ENCODE measurements at regions of chr18 and their contacts with region 1.

Region 1: GRCh38 chr18:54127759-54128378 is 96.6 kb downstream of the MBD2 start:
- DNase-seq: peak; percentile 41
- ATAC-seq: peak; percentile 95
- H3K4me3 ChIP-seq: no peak overlapping the region
- H3K27ac ChIP-seq: no peak overlapping the region
- H3K4me1 ChIP-seq: no peaks in the 10 kb centered on the region
- H3K27me3 ChIP-seq: no peaks in the 10 kb centered on the region
- CTCF ChIP-seq: peak; percentile 65
- EP300 ChIP-seq: no peak
- POLR2A ChIP-seq: no peak
- RAD21 ChIP-seq: no peak

Region 2: DNA sequence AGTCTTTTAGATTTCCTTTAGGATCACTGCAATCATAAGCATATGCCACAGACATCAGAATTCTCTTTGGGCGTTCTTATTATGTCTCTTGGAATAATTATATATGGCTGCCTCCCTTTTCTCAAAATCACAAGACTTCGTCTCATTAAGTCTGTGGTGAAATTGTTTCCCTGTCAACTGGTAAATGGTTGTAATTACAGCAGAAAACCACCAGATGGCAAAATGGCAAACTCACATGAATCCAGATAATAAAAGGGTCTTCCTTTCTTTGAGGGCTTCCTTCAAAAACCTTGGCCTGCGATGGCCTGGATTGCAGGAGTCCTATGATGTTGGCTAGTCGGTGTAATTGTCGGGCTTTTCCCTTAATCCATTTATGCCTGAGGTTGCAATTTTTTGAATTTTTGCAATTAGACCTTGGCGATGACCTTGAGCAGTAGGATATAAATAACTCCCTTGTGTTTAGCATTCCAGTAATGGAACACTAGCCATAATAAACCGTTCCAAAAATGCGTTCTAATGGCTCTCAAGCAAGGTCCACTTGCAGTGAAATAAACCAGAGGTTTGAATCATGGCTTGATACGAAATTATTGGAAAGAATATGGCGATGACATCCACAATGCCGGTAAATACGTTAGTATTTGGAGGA is 559.8 kb before region 1 on chr18:
- CTCF ChIA-PET with region 1: interaction called, 7 read pairs
- POLR2A ChIA-PET with region 1: no interaction called
- in situ Hi-C with region 1: loop called (anchors 5 kb)
- intact Hi-C with region 1: loop called (anchors 1 kb)
- DNase-seq: peak; percentile 29
- ATAC-seq: no peak
- H3K4me3 ChIP-seq: no peak overlapping the region
- H3K27ac ChIP-seq: no peak overlapping the region
- H3K4me1 ChIP-seq: no peaks in the 10 kb centered on the region
- H3K27me3 ChIP-seq: no peaks in the 10 kb centered on the region
- CTCF ChIP-seq: peak; percentile 52
- EP300 ChIP-seq: no peak
- POLR2A ChIP-seq: no peak
- RAD21 ChIP-seq: no peak

Region 3: GRCh38 chr18:53698907-53699306 is 429.0 kb before region 1 on chr18:
- CTCF ChIA-PET with region 1: no interaction called
- POLR2A ChIA-PET with region 1: no interaction called
- in situ Hi-C with region 1: loop called (anchors 5 kb)
- intact Hi-C with region 1: loop called (anchors 1 kb)
- DNase-seq: peak; percentile 33
- ATAC-seq: peak; percentile 82
- H3K4me3 ChIP-seq: no peak overlapping the region
- H3K27ac ChIP-seq: no peak overlapping the region
- H3K4me1 ChIP-seq: no peaks in the 10 kb centered on the region
- H3K27me3 ChIP-seq: no peaks in the 10 kb centered on the region
- CTCF ChIP-seq: peak; percentile 55
- EP300 ChIP-seq: no peak
- POLR2A ChIP-seq: no peak
- RAD21 ChIP-seq: no peak

Region 4: DNA sequence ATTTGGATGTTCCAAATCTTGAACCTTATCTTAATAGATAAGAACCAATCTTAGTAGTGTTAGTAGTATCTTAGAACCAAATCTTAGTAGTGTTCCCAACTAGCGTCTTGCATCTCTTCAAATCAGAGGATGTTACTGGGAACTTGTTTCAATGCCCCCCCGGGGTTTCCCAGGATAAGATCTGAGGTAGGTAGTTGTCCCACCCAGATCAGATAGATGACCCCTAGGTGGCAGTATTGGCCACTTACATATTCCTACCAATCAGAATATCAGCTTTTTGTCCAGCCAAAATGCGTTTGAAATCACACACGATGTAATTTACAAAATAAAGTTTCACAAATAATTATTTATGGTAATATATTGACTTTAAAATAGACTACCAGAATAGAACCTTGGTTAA is 218.2 kb before region 1 on chr18:
- CTCF ChIA-PET with region 1: no interaction called
- POLR2A ChIA-PET with region 1: no interaction called
- in situ Hi-C with region 1: loop called (anchors 25 kb)
- intact Hi-C with region 1: loop called (anchors 1 kb)
- DNase-seq: peak; percentile 7
- ATAC-seq: no peak; the same call in 2 of the 3 replicates
- H3K4me3 ChIP-seq: no peak overlapping the region
- H3K27ac ChIP-seq: no peak overlapping the region
- H3K4me1 ChIP-seq: no peaks in the 10 kb centered on the region
- H3K27me3 ChIP-seq: no peaks in the 10 kb centered on the region
- CTCF ChIP-seq: peak; percentile 19
- EP300 ChIP-seq: no peak
- POLR2A ChIP-seq: no peak
- RAD21 ChIP-seq: no peak

Region 5: DNA sequence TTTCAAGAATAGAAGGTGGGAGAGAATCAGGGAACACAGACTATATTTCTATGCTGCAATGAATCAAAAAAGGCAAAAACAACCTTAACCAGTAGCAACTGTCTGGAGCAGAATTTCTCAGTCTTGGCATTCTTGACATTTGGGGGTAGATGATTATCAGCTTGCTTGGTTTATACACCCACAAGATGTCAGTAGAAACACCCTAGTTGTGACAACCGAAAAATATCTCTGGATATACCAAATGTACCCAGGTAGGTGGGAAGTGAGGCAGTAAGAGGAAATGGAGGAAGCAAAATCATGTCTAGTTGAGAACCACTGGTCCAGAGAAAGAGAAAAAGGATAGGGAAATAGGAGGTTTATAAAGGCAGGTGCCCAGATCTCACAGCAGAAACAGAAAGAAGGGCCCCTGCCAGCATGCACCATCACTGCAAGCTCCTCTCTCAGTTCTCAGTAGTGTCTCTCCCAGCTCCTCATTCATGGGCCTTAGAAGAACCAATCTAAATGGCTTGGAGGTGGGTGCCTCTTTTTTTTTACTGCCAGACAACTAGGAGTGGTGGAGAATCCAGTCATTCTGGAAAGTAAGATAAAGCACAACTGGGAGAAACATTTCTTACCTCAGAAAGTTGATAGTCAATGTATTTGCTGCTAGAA is 46.2 kb after region 1 on chr18:
- CTCF ChIA-PET with region 1: no interaction called
- POLR2A ChIA-PET with region 1: no interaction called
- in situ Hi-C with region 1: no loop called
- intact Hi-C with region 1: loop called (anchors 2 kb)
- DNase-seq: no peak
- ATAC-seq: no peak
- H3K4me3 ChIP-seq: no peak overlapping the region
- H3K27ac ChIP-seq: no peak overlapping the region
- H3K4me1 ChIP-seq: no peaks in the 10 kb centered on the region
- H3K27me3 ChIP-seq: no peaks in the 10 kb centered on the region
- CTCF ChIP-seq: no peak
- EP300 ChIP-seq: no peak
- POLR2A ChIP-seq: no peak
- RAD21 ChIP-seq: no peak

Region 6: DNA sequence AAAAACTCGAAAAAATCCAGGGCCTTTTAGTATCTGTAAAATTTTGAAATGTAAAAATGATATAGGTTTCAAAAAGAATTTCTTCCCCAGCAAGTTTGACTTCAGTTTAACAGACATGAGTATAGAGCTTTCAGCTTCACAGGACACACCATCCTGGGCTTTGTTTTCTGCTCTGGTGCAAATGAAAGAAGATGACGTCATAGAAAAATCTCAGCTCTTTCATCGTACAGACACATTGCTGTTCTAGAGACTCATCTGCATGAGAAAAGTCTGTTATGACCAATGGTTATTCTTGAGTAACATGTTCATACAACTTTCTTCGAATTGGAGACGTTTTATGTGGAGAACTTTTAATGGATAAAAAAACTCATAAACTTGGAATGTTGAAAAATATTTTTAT is 351.5 kb after region 1 on chr18:
- CTCF ChIA-PET with region 1: no interaction called
- POLR2A ChIA-PET with region 1: no interaction called
- in situ Hi-C with region 1: no loop called
- intact Hi-C with region 1: no loop called
- DNase-seq: no peak
- ATAC-seq: no peak
- H3K4me3 ChIP-seq: no peak overlapping the region
- H3K27ac ChIP-seq: no peak overlapping the region
- H3K4me1 ChIP-seq: no peaks in the 10 kb centered on the region
- H3K27me3 ChIP-seq: no peaks in the 10 kb centered on the region
- CTCF ChIP-seq: no peak
- EP300 ChIP-seq: no peak
- POLR2A ChIP-seq: no peak
- RAD21 ChIP-seq: no peak